Breast epithelium (tissue), 4 donors: ENCODE measurements at regions of chr10 and their contacts with region 1.

Region 1: GRCh38 chr10:23314835-23315239 is 29.8 kb downstream of the C10orf67 start:
- DNase-seq: no peak
- H3K4me3 ChIP-seq: no peak overlapping the region
- H3K27ac ChIP-seq: no peak overlapping the region
- H3K4me1 ChIP-seq: no peaks in the 10 kb centered on the region
- H3K27me3 ChIP-seq: no peaks in the 10 kb centered on the region
- CTCF ChIP-seq: peak in 2 of 3 donors; percentile 67 to 69
- POLR2A ChIP-seq: no peak

Region 2: DNA sequence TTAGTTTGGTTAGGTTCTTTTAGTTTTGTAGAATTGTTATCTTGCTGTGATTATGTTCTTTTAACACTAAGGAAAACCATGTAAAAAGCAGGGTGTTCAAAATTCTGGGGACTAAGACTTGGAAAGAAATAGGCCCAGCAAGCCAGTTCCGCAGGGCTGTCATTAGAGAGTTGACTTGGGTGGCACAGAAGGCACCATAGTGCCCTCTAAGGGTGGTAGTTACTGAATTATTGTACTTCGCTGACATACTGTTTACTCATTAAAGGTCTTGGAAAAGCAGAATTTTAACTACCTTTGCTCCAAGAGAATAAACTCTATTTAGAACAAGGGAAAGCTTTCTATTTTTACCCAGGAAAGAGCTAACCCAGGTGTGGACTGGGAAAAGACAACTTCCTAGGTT is 210.6 kb after region 1 on chr10:
- intact Hi-C with region 1: loop called (anchors 10 kb)
- DNase-seq: no peak
- H3K4me3 ChIP-seq: no peak overlapping the region
- H3K27ac ChIP-seq: no peak overlapping the region
- H3K4me1 ChIP-seq: no peaks in the 10 kb centered on the region
- H3K27me3 ChIP-seq: no peaks in the 10 kb centered on the region
- CTCF ChIP-seq: peak in 2 of 3 donors; percentile 21 to 44
- POLR2A ChIP-seq: no peak